Activated CD4-positive, alpha-beta memory T cell treated with anti-CD3 and anti-CD28 coated beads for 36 hours (primary cell): ENCODE measurements at regions of chr12 and their contacts with region 1.

Region 1: DNA sequence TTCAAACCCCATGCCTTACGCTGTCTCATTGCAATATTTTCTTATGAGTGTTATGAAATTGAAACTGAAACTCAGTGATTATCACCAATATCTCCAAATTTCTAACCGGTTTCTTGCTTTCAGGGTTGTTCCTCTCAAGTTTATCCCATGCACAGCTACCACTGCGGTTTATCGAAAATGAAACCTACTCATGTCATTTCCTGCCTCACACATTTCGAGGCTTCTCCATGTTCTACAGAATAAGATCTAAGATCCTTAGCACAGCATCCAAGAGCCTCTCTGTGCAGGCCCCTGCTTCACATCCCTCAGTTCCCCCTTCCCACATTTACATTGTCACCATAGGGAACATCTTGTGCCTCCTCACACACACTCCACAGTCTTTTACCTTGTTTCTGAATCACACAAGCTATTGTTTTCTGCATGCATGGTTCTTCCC is 45.5 kb upstream of the FAR2 start:
- DNase-seq: peak; percentile 64
- H3K4me3 Mint-ChIP-seq: peak overlapping the region; percentile 4
- H3K27ac Mint-ChIP-seq: peak overlapping the region; percentile 56
- H3K4me1 Mint-ChIP-seq: peaks cover 32% of the 10 kb centered on the region
- H3K27me3 Mint-ChIP-seq: no peaks in the 10 kb centered on the region

Region 2: DNA sequence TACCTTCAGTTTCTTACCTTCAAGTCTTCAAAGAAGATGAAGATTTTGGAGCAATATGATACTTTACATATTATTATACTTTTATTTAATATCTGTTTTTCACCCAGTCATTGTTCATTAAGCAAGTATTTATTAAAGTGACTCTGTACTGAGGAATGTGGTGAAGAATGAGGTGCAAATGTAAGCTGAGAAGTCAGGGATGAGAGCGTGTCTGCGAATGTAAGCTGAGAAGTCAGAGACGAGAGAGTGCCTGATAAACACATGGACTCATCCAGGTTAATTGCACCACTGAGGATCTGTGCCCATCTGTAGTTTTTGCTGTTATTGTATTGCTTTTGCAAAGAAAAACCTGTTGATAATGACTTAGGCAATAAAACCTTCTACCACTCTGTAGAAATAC is 166.4 kb before region 1 on chr12:
- CTCF ChIA-PET with region 1: no interaction called
- POLR2A ChIA-PET with region 1: no interaction called
- intact Hi-C with region 1: no loop called
- DNase-seq: no peak
- H3K4me3 Mint-ChIP-seq: no peak overlapping the region
- H3K27ac Mint-ChIP-seq: no peak overlapping the region
- H3K4me1 Mint-ChIP-seq: no peaks in the 10 kb centered on the region
- H3K27me3 Mint-ChIP-seq: no peaks in the 10 kb centered on the region

Region 3: DNA sequence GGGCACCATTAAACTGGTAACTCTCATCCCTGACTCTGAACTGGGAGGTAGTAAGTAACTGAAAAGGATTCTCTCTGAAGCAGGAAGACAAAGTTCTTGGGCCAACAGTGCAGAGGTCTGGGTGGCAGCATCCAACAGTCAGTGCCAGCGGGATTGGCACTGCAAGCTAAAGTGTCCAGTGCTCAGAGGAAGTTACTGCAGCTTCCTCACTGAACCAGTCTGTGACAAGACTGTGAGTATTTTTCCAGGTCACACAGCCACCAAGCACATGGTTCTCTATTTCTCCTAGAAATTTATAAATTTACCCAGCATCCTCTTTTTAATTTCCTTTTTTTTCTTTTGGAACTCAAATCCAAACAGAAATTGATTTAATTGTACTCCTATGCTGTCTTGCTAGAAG is 36.1 kb before region 1 on chr12:
- CTCF ChIA-PET with region 1: no interaction called
- POLR2A ChIA-PET with region 1: no interaction called
- intact Hi-C with region 1: no loop called
- DNase-seq: no peak
- H3K4me3 Mint-ChIP-seq: no peak overlapping the region
- H3K27ac Mint-ChIP-seq: no peak overlapping the region
- H3K4me1 Mint-ChIP-seq: no peaks in the 10 kb centered on the region
- H3K27me3 Mint-ChIP-seq: peaks cover 16% of the 10 kb centered on the region

Region 4: DNA sequence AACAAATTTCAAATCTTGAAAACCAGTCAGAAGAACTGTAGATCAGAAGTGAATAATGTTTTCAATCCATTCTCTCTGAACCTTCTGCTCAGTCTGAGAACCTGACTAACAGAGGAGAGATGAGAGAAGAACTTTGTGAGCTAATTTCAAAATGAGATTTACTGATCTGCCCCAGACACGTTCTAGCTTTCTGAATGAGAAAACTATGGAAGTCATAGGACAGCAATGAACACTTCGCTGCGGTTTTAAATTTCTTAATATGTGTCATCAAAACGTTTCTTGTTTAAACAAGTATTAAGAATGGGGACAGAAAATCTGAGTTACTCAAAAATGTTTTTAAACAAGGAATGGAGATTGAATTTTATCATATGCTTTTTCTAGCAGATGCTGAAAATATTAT is 21.0 kb before region 1 on chr12:
- CTCF ChIA-PET with region 1: interaction called, 7 read pairs
- POLR2A ChIA-PET with region 1: interaction called, 5 read pairs
- intact Hi-C with region 1: loop called (anchors 1 kb)
- DNase-seq: no peak
- H3K4me3 Mint-ChIP-seq: no peak overlapping the region
- H3K27ac Mint-ChIP-seq: peak overlapping the region; percentile 40
- H3K4me1 Mint-ChIP-seq: peaks cover 16% of the 10 kb centered on the region
- H3K27me3 Mint-ChIP-seq: peaks cover 25% of the 10 kb centered on the region

Region 5: GRCh38 chr12:29148911-29149690 is 45.5 kb after region 1 on chr12 and contains the start of gene FAR2:
- CTCF ChIA-PET with region 1: no interaction called
- POLR2A ChIA-PET with region 1: interaction called, 3 read pairs
- intact Hi-C with region 1: loop called (anchors 1 kb)
- DNase-seq: peak; percentile 61
- H3K4me3 Mint-ChIP-seq: peak within 1 kb of the TSS; percentile 92
- H3K27ac Mint-ChIP-seq: peak within 1 kb of the TSS; percentile 76
- H3K4me1 Mint-ChIP-seq: peaks cover 19% of the 10 kb centered on the region
- H3K27me3 Mint-ChIP-seq: peaks cover 1% of the 10 kb centered on the region
- total RNA-seq, gene FAR2: 9.2 to 9.9 TPM

Region 6: DNA sequence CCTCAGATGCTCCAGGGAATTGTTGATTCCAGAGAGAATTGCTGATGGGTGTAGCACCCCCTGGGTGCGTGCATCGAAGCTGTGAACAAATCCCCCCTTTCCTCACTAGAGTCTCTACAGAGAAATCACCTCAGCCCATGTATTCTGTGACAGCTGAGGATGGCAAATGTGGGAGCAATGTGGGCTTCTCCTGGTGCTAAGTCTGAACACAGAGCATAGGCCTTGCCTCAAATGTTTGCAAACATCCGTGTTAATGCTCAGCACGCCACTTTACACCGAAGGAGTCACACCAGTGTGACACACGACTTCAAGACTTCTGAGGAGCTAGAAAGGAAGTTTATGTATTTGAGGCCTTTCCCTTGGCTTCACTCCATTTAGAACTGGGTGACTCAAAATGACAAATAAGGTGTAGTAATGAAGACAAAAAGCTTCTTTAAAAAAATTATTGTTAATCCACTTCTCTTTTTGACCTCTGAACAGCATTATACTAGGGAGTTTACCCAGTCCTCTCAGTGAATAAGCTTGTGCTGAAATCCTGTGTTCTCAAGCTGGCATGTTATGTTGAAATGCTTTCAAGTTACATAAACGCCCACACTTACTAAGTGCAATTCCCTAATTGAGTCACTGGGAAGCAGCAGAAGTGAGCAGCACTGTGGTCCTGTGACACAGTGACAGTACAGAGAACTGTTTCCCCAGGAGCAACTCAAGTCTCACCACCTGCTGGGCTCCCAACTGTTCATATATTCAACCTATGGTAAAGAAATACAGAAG is 138.4 kb after region 1 on chr12:
- CTCF ChIA-PET with region 1: no interaction called
- POLR2A ChIA-PET with region 1: no interaction called
- intact Hi-C with region 1: loop called (anchors 1 kb)
- DNase-seq: peak; percentile 35
- H3K4me3 Mint-ChIP-seq: no peak overlapping the region
- H3K27ac Mint-ChIP-seq: no peak overlapping the region
- H3K4me1 Mint-ChIP-seq: peaks cover 18% of the 10 kb centered on the region
- H3K27me3 Mint-ChIP-seq: no peaks in the 10 kb centered on the region

Region 7: GRCh38 chr12:29414368-29414767 is 310.8 kb after region 1 on chr12:
- CTCF ChIA-PET with region 1: no interaction called
- POLR2A ChIA-PET with region 1: no interaction called
- intact Hi-C with region 1: no loop called
- DNase-seq: no peak
- H3K4me3 Mint-ChIP-seq: no peak overlapping the region
- H3K27ac Mint-ChIP-seq: no peak overlapping the region
- H3K4me1 Mint-ChIP-seq: no peaks in the 10 kb centered on the region
- H3K27me3 Mint-ChIP-seq: peaks cover 4% of the 10 kb centered on the region